SK-N-SH (cell line): ENCODE measurements at regions of chr2 and their contacts with region 1.

Region 1: GRCh38 chr2:85826990-85827878 is 61.6 kb downstream of the ST3GAL5 start:
- DNase-seq: peak; percentile 84
- H3K4me3 ChIP-seq: peak overlapping the region; percentile 15 to 49; a peak in 2 of 4 replicates
- H3K27ac ChIP-seq: no peak overlapping the region
- H3K4me1 ChIP-seq: peaks cover 0 to 7% of the 10 kb centered on the region in 2 experiments; a peak in 1 of 4 replicates
- H3K27me3 ChIP-seq: no peaks in the 10 kb centered on the region
- CTCF ChIP-seq: peak; percentile 87
- EP300 ChIP-seq: no peak
- RAD21 ChIP-seq: peak; percentile 92

Region 2: DNA sequence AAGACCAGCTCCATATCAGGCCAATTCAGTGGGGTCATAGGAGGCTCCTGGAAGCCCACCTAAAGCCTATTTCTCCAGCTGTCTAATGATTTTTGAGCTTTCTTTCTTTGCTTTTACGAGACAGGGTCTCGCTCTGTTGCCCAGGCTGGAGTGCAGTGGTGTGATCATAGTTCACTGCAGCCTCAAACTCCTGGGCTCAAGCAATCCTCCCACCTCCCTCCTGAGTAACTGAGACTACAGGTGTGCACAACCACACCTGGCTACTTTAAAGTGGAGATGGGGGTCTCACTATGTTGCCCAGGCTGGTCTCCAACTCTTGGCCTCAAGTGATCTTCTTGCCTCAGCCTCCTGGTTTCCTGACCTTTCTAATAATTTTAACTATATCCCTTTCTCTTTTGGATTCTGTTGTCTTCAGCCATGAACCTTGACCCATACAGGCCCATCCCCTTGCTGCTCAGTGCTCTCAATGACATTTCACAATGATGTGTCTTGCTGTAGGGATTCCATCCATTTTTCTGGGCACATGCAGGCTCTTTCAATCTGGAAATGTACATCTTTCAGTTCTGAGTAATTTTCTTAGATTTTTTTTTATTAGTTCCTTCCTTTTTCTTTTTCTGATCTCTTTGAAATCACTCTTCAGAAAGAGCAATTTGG is 103.4 kb before region 1 on chr2:
- CTCF ChIA-PET with region 1: interaction called, 21 read pairs
- POLR2A ChIA-PET with region 1: no interaction called
- DNase-seq: no peak
- H3K4me3 ChIP-seq: no peak overlapping the region
- H3K27ac ChIP-seq: no peak overlapping the region
- H3K4me1 ChIP-seq: peaks cover 0 to 16% of the 10 kb centered on the region in 2 experiments; a peak in 2 of 4 replicates
- H3K27me3 ChIP-seq: no peaks in the 10 kb centered on the region
- CTCF ChIP-seq: no peak
- EP300 ChIP-seq: no peak
- RAD21 ChIP-seq: no peak

Region 3: DNA sequence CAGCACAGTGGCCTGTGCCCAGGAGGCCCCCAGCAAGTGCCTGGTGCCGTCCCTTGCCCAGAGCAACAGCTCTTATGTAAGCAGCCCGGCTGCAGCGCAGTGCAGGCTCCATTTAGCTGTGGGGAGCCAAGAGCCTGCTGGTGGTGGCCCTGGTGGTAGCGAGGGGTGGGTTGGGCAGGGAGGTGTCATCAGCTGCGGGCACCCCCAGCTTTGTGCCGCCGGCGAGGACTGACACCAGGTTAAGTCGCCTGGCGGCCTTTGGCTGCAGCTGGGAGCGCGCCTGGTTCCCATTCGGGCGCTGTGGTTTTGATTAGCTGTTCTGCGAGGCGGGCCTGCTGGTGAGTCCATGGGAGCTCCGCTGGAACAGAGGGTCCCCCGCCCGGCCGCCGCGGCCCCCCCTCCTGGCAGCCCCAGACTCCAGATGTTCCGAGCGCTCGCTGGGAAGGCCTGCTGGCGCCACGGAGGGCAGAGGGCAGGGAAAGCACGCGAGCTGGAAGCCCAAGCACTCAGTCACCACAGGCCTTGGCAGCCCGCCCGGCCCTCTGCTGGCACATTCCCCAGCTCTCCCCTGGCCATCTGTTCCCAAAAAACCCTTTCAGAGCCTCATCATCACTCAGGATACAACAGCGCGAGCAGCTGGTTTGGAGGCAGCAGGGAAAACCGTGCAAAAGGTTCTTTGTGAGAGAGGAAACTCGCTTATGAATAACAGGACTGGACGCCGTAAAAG is 55.1 kb before region 1 on chr2:
- CTCF ChIA-PET with region 1: interaction called, 10 read pairs
- POLR2A ChIA-PET with region 1: no interaction called
- DNase-seq: peak; percentile 96
- H3K4me3 ChIP-seq: peak overlapping the region; percentile 28 to 55
- H3K27ac ChIP-seq: peak overlapping the region; percentile 96 to 99
- H3K4me1 ChIP-seq: peaks cover 63 to 70% of the 10 kb centered on the region in 2 experiments
- H3K27me3 ChIP-seq: no peaks in the 10 kb centered on the region
- CTCF ChIP-seq: peak; percentile 46
- EP300 ChIP-seq: peak; percentile 92 to 100
- RAD21 ChIP-seq: peak; percentile 53

Region 4: DNA sequence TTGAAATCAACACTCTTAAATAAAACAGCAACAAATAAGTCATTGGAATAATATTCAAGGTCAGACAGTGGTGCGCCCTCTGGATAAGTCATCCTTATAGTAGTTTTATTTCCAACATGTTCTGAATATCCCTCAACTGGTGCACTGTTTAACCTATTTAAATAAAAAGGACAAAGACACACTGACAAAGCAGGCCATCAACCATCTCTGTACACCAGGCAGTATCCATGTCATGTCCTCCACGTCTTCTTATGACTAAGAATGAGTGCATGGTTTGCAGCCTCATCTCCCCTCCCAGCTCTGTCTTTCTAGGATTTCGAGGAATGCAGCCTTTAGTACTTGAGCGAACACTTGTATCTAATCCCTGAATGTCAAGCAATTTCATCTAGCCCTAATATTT is 19.2 kb after region 1 on chr2:
- CTCF ChIA-PET with region 1: interaction called, 34 read pairs
- POLR2A ChIA-PET with region 1: no interaction called
- DNase-seq: no peak
- H3K4me3 ChIP-seq: no peak overlapping the region
- H3K27ac ChIP-seq: no peak overlapping the region
- H3K4me1 ChIP-seq: peaks cover 0 to 5% of the 10 kb centered on the region in 2 experiments; a peak in 1 of 4 replicates
- H3K27me3 ChIP-seq: no peaks in the 10 kb centered on the region
- CTCF ChIP-seq: no peak
- EP300 ChIP-seq: no peak
- RAD21 ChIP-seq: no peak

Region 5: DNA sequence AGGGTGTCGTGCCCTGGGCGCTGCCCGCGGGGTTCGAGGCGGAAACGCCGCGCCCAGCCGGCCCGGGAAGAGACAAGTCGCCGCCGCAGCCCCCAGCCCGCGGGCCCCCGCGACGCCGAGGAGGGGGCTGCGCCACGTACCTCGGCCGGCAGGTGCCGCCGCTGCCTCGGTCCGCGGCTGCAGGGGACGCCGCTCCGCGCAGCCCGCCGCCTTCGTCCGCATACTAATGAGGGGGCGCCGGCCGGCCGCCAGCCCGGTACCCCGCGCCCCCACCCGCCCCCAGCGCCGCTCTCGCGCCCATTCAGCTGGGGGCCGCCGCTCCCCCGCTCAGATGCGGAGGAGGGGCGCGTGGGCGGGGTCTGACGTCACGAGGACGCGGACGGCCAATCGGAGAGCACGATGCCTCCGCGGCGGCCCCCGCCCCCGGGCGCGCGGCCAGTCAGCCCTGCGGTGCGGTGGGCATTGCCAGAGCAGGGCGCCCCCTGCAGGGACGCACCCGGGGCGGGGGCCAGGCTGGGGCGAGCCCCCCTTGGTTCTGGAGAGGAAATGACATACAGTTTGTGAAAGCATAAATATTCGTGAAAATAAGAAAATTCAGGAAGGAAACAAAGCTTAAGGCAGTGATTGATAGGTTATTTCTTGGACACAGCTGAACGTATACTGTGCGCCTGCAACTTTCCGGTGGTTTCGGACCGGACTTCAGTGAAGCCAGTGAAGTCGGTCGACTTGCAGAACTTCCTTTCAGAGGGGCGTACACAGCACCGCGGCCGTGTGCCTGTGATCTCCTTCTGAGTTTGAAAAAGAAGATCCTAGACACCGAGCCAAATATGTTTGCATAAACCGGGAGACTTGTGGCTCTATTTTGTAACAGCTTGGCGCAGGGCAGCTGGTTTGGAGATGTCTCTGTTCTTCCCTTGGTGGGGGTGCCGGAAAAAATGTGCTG is 61.7 kb after region 1 on chr2 and contains the start of gene ST3GAL5:
- CTCF ChIA-PET with region 1: interaction called, 120 read pairs
- POLR2A ChIA-PET with region 1: no interaction called
- DNase-seq: peak; percentile 97
- H3K4me3 ChIP-seq: peak within 1 kb of the TSS; percentile 71 to 73
- H3K27ac ChIP-seq: peak within 1 kb of the TSS; percentile 70 to 72
- H3K4me1 ChIP-seq: peaks cover 18 to 30% of the 10 kb centered on the region in 2 experiments
- H3K27me3 ChIP-seq: no peaks in the 10 kb centered on the region
- CTCF ChIP-seq: peak; percentile 96
- EP300 ChIP-seq: no peak
- RAD21 ChIP-seq: peak; percentile 54
- polyA plus RNA-seq, gene ST3GAL5: 37.6 and 55.7 TPM in 2 replicates

Region 6: DNA sequence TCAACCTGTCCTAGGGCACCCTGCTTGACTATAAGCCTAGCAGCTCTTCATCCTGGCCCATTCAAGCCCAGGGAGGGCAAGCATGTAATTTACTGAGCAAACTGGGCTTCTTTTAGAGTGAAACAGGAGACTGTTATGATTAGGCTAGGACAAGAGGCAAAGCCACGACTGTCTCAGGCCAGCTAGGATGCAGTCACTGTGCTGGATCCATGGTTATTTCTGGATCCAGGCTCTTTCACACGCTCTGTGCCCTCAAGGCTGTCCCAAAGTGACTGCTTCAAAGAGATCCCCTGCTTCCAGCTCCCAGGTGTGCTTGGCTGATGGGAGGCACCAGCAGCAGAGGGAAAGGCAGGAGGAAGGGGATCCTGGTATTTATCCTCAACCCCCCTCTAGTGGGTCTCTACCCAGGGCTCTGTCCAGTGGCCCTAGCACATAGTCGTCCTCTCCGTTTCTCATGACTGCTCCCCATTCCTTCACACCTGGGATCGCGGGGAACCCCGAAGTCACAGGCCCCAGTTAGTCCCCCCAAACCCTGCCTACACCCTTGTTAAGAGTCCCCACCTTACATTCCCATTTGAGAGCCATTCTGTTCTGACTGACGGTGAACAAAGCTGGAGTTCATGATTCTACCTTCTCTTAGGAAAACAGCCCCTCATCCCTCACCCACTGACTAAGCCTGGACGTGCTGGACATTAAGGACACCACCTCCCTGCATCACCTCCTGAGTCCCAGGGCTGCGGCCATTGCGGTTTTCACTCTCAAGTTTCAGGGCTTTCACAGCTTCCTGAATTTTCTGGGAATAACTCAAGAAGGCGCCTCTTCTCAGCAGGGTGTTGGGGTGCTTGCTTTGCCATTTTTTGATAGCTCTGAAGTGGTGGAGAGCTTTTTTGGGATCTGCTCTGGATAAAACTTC is 215.3 kb after region 1 on chr2:
- CTCF ChIA-PET with region 1: interaction called, 19 read pairs
- POLR2A ChIA-PET with region 1: no interaction called
- DNase-seq: no peak
- H3K4me3 ChIP-seq: no peak overlapping the region
- H3K27ac ChIP-seq: no peak overlapping the region
- H3K4me1 ChIP-seq: peaks cover 0 to 11% of the 10 kb centered on the region in 2 experiments; a peak in 3 of 4 replicates
- H3K27me3 ChIP-seq: no peaks in the 10 kb centered on the region
- CTCF ChIP-seq: no peak
- EP300 ChIP-seq: no peak
- RAD21 ChIP-seq: no peak

Region 7: DNA sequence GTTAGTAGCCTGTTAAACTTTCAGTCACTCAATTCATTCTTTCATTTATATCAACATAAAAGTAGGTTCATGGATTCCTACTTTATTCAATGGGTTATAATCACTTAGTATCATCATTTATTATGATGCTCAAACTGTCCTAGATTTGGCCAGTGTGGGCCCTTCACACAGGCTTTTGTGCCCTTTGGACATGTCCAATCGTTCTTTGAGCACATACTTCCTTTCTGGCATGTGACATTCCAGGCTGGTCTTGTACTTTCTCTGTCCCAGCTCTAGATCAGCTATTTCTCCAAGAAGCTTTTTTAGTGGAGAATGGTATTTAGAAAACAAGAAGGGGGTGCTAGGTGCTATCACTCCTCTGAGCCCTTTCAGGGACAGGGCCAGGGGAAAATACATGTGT is 267.0 kb after region 1 on chr2:
- CTCF ChIA-PET with region 1: interaction called, 11 read pairs
- POLR2A ChIA-PET with region 1: no interaction called
- DNase-seq: no peak
- H3K4me3 ChIP-seq: no peak overlapping the region
- H3K27ac ChIP-seq: no peak overlapping the region
- H3K4me1 ChIP-seq: no peaks in the 10 kb centered on the region
- H3K27me3 ChIP-seq: no peaks in the 10 kb centered on the region
- CTCF ChIP-seq: no peak
- EP300 ChIP-seq: no peak
- RAD21 ChIP-seq: no peak